Left colon (tissue), 2 donors: ENCODE measurements at regions of chr18 and their contacts with region 1.

Region 1: GRCh38 chr18:31741097-31741735 is 19.5 kb downstream of the SLC25A52 start:
- DNase-seq: peak in 1 of 2 donors; percentile 55
- ATAC-seq: no peak

Region 2: DNA sequence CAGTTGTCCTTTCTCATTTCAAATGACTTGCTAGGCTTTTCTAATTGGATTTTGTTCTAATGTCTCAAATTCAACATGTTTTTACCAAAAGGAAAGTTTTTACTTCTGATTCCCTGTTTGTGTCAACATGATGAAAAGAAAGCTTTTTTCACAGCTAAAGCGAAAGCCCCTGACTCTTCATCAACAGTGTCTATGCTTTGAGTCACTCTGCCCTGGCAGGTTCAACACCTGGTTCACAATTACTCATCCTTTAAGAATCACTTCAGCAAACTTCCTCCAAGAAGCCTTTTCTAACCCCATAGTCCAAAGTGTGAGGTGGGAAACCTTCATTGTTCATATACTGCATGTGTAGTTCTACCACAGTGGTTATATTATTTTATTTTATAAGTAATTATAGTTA is 250.8 kb before region 1 on chr18:
- intact Hi-C with region 1: no loop called
- DNase-seq: no peak
- ATAC-seq: peak; percentile 83

Region 3: DNA sequence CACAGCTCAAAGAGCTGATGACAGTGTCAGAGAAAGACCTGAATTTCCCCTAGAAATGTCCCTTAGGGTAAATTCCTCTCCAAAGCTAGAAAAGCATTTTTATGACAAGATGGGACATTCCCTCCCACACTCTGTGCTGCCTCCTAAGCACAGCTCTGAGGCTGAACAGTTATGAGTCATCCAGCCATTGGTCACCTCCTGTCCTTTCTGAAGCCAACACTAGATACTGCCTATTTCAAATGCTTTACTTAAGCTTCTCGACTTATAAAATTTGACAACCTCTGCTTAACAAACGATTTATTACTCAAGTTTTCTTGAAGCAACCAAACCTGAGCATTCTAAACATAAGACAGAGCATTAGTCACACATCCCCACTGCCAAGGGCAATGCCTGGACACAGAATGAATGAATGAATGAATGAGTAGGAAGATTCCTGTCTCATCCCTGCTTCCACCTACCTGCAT is 92.2 kb before region 1 on chr18:
- intact Hi-C with region 1: no loop called
- DNase-seq: no peak
- ATAC-seq: peak; percentile 38

Region 4: DNA sequence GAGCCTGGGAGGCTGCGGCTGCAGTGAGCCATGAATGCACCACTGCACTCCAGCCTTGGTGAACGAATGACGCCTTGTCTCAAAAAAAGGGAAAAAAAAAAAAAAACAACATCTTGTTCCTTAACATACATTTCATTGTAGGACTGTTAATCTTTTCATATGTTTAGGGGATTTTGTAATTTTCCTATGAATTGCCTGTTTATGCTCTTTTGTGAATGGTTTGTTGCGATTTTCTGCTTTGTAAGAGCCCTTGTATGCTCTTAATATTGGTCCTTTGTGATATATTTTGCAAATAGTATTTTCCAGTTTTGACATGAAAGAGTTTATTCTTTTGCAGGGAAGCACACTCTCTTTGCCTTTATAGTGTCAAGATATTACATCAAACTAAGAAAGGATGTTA is 151.7 kb after region 1 on chr18:
- intact Hi-C with region 1: no loop called
- DNase-seq: no peak
- ATAC-seq: no peak

Region 5: DNA sequence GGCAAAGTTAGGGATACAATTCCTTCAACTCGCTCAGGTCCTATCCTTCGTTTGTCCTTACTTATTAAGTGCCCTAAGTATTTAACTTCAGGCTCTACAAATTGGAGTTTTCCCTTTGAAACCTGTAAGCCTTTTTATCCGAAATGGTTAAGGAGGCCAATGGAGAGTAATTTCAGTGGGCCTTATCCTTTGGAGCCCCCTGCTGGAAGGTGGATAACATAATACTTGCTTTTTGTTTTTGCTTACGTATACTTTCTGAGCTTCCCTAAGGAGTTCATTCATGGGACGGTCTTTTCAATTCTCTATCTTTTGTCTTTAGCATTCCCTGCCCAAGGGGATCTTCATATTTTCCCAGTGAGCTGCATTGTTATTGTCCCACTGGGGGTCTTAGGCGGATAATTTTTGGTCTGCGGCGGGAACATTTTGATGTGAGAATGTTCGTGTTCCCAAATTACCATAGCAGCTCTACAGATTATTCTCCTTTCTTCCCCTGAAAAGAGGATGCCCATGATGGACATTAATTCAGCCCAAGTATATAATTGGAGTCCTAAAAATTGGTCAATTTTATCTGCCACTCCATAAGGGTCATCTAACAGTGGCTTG is 236.2 kb after region 1 on chr18:
- intact Hi-C with region 1: loop called in 1 of 2 experiments (anchors 10 kb)
- DNase-seq: no peak
- ATAC-seq: peak; percentile 48